ENCODE measurements at regions of chrX and their contacts with region 1.

Region 1: DNA sequence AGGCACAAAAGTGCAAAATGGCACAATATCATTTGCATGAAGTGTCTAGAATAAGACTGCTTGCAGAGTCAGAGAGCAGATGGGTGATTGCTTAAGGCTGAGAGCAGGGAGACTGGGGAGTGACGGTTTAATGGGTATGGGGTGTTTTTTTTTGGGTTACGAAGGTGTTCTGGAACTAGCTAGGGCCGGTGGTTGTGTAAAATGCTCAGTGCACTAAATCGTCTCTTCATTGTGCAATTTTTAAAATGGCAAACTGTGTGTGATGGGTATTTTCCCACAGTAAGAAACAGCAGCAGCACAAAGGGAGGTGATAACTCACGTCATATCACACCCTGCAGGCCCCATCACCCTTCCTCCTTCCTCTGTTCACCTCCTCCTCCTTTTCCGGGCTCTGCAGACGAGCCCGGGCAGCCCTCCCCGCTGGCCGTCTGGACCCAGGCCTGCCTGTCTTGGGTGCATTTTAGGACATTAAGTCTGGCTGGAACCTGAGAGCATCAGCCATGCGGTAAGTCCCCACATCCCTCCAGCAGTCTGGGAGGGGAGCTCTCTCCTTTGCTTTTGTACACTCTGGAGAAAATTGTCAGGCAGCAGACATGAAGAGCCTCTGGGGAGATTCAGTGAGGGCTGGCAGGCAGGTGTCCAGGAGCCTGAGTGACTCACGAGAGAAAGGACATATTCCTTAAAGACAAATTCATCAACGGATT is 42.7 kb downstream of the ASMT start:
- DNase-seq: peak; percentile 87
- H3K4me3 Mint-ChIP-seq: peak overlapping the region; percentile 99
- H3K27ac Mint-ChIP-seq: peak overlapping the region; percentile 99
- H3K4me1 Mint-ChIP-seq: peaks cover 37% of the 10 kb centered on the region
- H3K27me3 Mint-ChIP-seq: no peaks in the 10 kb centered on the region

Region 2: DNA sequence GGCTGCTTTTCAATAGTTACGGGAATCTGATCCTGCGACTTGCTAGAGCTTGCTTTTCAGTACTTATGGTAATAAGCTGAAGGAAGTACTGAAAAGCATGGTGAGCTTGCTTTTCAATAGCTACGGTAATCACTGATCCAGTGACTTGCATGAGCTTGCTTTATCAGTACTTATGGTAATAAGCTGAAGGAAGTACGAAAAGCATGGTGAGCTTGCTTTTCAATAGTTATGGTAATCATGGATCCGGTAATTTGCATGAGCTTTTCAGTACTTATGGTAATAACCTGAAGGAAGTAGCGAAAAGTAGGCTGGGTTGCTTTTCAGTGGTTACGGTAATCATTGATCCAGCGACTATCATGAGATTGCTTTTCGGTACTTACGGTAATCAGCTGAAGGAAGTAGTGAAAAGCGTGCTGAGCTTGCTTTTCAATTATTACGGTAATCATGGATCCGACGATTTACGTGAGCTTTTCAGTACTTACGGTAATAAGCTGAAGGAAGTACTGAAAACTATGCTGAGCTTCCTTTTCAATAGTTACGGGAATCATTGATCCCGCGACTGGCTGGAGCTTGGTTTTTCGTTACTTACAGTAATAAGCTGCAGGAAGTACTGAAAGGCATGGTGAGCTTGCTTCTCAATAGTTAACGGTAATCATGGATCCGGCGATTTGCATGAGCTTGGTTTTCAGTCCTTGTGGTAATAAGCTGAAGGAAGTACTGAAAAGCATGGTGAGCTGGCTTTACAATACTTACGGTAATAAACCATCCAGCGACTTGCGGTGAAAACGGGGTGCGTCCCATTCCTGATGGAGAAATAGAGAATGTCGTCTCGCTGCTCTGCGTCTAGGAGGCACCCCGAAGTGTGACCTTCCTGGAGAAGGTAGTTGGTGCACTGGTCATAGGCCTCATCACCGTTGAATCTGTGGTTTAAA is 451.6 kb before region 1 on chrX:
- CTCF ChIA-PET with region 1: no interaction called
- intact Hi-C with region 1: loop called (anchors 2 kb)
- DNase-seq: peak; percentile 67
- H3K4me3 Mint-ChIP-seq: peak overlapping the region; percentile 72
- H3K27ac Mint-ChIP-seq: peak overlapping the region; percentile 72
- H3K4me1 Mint-ChIP-seq: peaks cover 17% of the 10 kb centered on the region
- H3K27me3 Mint-ChIP-seq: no peaks in the 10 kb centered on the region

Region 3: DNA sequence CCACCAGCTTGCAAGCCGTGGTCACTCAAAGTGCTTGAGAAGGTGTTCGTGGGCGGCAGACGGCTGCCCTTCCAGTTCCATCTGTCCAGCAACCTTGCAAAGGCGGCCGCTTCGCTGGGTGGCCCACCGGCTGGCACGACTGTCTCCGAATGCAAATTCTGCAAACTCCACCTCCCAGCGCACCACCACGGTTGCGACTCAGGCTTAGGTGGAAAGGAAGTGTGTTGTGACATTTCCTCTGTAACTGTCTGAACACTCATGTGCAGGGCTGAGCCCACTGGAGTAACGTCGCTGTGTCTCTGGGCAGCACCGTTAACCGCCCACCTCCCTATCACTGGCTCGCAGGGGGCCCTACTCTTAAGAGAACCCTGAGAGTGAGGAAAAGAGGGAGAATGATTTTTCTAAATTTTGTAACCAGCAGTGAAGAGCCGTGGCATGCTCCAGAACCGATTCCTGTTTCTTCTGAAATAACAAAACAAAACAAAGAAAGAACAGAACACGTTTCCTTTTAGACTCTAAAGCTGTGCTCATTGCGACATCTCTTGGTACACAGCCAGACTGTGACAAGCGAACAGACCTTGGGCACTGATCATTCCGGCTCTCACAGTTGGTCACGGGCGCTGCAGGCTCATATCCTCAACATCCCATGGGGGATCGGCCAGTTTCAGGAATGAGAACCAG is 120.3 kb before region 1 on chrX and contains the start of gene P2RY8:
- CTCF ChIA-PET with region 1: no interaction called
- intact Hi-C with region 1: loop called (anchors 1 kb)
- DNase-seq: peak; percentile 89
- H3K4me3 Mint-ChIP-seq: peak within 1 kb of the TSS; percentile 91
- H3K27ac Mint-ChIP-seq: peak within 1 kb of the TSS; percentile 97
- H3K4me1 Mint-ChIP-seq: peaks cover 15% of the 10 kb centered on the region
- H3K27me3 Mint-ChIP-seq: no peaks in the 10 kb centered on the region
- total RNA-seq, gene P2RY8: 9.8 to 10.6 TPM

Region 4: GRCh38 chrX:2595258-2595657 is 937.7 kb after region 1 on chrX:
- CTCF ChIA-PET with region 1: no interaction called
- intact Hi-C with region 1: loop called (anchors 1 kb)
- DNase-seq: no peak
- H3K4me3 Mint-ChIP-seq: no peak overlapping the region
- H3K27ac Mint-ChIP-seq: no peak overlapping the region
- H3K4me1 Mint-ChIP-seq: no peaks in the 10 kb centered on the region
- H3K27me3 Mint-ChIP-seq: no peaks in the 10 kb centered on the region

Region 5: DNA sequence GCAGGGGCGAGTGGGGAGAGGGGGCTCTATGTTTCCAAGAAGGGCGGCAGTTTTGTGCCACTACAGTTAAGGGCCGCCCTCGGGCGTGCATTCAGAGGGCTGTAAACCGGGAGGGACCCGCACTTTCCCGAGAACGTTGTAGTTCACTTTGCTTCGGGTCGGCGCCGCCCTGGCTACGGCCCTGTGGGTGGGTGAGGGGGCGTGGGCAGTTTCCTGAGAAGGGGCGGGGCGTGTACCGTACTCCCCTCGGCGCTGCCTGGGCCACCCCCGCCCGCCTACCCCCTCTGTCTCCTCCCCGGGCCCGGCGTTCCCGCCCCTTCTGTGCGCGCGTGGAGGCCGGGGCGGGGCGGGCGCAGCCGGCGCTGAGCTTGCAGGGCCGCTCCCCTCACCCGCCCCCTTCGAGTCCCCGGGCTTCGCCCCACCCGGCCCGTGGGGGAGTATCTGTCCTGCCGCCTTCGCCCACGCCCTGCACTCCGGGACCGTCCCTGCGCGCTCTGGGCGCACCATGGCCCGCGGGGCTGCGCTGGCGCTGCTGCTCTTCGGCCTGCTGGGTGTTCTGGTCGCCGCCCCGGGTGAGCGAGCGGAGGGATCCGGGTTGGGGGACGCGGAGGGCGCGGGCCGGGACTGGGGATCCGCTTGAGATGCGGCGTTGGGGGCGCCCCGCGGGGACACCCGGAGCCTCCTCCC is 1033.5 kb after region 1 on chrX and contains the start of gene CD99:
- CTCF ChIA-PET with region 1: no interaction called
- intact Hi-C with region 1: loop called (anchors 1 kb)
- DNase-seq: peak; percentile 87
- H3K4me3 Mint-ChIP-seq: peak within 1 kb of the TSS; percentile 99
- H3K27ac Mint-ChIP-seq: peak within 1 kb of the TSS; percentile 99
- H3K4me1 Mint-ChIP-seq: peaks cover 28% of the 10 kb centered on the region
- H3K27me3 Mint-ChIP-seq: no peaks in the 10 kb centered on the region
- total RNA-seq, gene CD99: 205 to 215 TPM

Region 6: GRCh38 chrX:2967998-2968909 is 1310.7 kb after region 1 on chrX:
- CTCF ChIA-PET with region 1: no interaction called
- intact Hi-C with region 1: loop called (anchors 5 kb)
- DNase-seq: peak; percentile 61
- H3K4me3 Mint-ChIP-seq: peak overlapping the region; percentile 24
- H3K27ac Mint-ChIP-seq: peak overlapping the region; percentile 76
- H3K4me1 Mint-ChIP-seq: peaks cover 10% of the 10 kb centered on the region
- H3K27me3 Mint-ChIP-seq: no peaks in the 10 kb centered on the region

Measured in activated naive CD4-positive, alpha-beta T cell treated with anti-CD3 and anti-CD28 coated beads for 36 hours (primary cell).